Head of caudate nucleus (tissue), 42 donors: ENCODE measurements at regions of chr17 and their contacts with region 1.

Region 1: DNA sequence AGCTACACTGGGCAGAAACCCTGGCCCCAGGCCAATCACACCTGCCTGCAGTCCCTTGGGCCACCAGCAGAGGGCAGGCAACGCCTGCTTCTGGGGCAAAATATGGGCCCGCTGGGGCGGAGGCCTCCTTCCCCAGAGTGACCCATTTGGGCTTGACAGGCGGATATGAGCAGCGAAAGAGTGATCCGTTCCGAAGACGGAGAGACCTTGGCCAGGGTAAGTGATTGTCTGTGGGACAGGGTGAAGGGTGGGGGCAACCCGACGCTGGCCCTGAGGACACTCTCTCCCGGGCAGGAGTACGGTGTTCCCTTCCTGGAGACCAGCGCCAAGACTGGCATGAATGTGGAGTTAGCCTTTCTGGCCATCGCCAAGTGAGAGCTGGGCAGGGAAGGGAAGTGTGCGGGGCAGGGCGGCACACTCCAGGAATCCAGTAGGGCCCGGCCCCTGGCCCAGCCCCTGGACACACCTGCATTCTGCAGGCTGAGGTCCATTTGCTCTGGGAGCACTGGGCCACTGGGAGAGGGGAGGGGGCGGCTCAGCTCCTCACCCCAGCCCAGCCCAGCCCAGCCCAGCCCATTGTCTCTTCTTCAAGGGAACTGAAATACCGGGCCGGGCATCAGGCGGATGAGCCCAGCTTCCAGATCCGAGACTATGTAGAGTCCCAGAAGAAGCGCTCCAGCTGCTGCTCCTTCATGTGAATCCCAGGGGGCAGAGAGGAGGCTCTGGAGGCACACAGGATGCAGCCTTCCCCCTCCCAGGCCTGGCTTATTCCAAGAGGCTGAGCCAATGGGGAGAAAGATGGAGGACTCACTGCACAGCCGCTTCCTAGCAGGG is 3.5 kb upstream of the NHERF1 start:
- DNase-seq: peak; percentile 33 to 97 (median 88)

Region 2: DNA sequence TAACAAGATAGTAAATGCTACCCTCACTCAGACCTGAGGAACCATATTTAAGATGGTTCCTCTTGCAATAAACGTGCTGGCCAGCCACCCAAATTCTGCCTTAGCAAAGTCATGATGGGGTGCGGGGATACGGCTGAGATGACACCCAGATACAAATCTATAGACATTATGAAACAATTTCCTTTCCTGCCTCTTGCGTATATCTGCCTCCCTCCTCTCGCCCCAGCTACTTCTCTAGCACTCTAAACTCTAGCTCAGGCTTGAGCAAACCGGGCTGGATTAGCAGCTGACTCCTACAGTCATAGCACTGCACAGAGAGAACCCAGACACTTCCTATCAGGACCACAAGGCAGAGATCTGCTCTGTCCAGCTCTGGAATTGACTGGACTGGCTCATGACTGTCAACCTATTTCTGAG is 54.5 kb before region 1 on chr17:
- intact Hi-C with region 1: no loop called
- DNase-seq: peak in 10 of 42 donors; percentile 6 to 53 (median 15)

Region 3: GRCh38 chr17:74702116-74702871 is 42.6 kb before region 1 on chr17:
- intact Hi-C with region 1: no loop called
- DNase-seq: no peak

Region 4: GRCh38 chr17:74770498-74771318 is 25.8 kb after region 1 on chr17:
- intact Hi-C with region 1: loop called (anchors 2 kb)
- DNase-seq: peak; percentile 42 to 87 (median 70)

Region 5: DNA sequence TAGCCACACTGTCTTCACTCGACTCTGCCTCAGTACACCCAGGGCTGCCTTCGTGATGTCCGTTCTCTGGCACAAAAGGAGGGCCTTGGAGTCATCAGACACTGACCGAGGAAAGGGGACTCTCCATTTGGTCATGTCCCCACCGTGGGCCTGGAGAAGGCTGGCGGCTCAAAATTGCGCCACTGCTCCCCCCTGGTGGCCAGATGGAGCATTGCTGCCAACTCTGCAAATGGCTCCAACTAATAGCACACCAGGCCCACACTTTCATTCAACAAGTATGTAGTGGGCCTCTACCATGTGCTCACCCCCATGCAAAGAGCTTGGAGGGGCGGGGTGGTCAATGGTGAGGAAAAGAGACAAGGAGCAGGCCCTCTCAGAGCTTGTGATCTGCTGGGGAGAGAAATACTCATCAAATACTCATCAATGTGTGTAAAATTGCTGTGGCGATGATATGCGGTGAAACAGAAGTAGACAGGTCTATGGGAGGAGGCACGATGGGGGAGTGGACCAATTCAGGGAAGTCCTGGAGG is 120.0 kb after region 1 on chr17:
- intact Hi-C with region 1: loop called (anchors 2 kb)
- DNase-seq: peak; percentile 62 to 94 (median 86)